ENCODE measurements at regions of chr1 and their contacts with region 1.

Region 1: DNA sequence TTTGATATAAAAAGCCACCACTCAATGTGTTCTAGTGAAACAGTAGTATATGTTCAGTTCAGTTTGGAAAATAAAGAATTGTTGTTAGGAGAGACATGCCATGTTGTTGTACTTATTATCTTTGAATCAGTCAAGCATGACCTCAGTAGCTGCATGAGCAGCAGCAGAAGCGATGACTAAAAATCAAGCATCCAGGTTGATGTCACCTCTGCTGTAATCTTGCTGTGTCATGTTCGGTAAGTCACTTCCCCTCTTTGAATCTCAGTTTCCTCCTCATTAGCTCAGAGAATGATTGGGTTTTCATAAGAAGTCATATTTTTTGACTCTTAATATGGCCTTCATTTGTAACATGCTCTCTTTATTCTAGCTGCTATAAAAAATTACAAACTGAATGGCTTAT is 428.4 kb upstream of the B3GALT2 start:
- DNase-seq: no peak
- ATAC-seq: no peak
- H3K4me3 ChIP-seq: no peak overlapping the region
- H3K4me3 Mint-ChIP-seq: no peak overlapping the region
- H3K27ac ChIP-seq: no peak overlapping the region
- H3K27ac Mint-ChIP-seq: no peak overlapping the region
- H3K4me1 ChIP-seq: no peaks in the 10 kb centered on the region
- H3K4me1 Mint-ChIP-seq: no peaks in the 10 kb centered on the region
- H3K27me3 ChIP-seq: no peaks in the 10 kb centered on the region
- H3K27me3 Mint-ChIP-seq: no peaks in the 10 kb centered on the region
- CTCF ChIP-seq: no peak

Region 2: GRCh38 chr1:193602705-193603104 is 12.1 kb before region 1 on chr1:
- CTCF ChIA-PET with region 1: no interaction called
- POLR2A ChIA-PET with region 1: interaction called, 4 read pairs
- intact Hi-C with region 1: loop called in 1 of 2 experiments (anchors 2 kb)
- DNase-seq: no peak
- ATAC-seq: no peak
- H3K4me3 ChIP-seq: no peak overlapping the region
- H3K4me3 Mint-ChIP-seq: no peak overlapping the region
- H3K27ac ChIP-seq: no peak overlapping the region
- H3K27ac Mint-ChIP-seq: no peak overlapping the region
- H3K4me1 ChIP-seq: no peaks in the 10 kb centered on the region
- H3K4me1 Mint-ChIP-seq: peaks cover 2% of the 10 kb centered on the region
- H3K27me3 ChIP-seq: no peaks in the 10 kb centered on the region
- H3K27me3 Mint-ChIP-seq: no peaks in the 10 kb centered on the region
- CTCF ChIP-seq: no peak

Region 3: GRCh38 chr1:193629875-193630274 is 15.1 kb after region 1 on chr1:
- CTCF ChIA-PET with region 1: no interaction called
- POLR2A ChIA-PET with region 1: no interaction called
- intact Hi-C with region 1: no loop called
- DNase-seq: no peak
- ATAC-seq: no peak
- H3K4me3 ChIP-seq: no peak overlapping the region
- H3K4me3 Mint-ChIP-seq: no peak overlapping the region
- H3K27ac ChIP-seq: no peak overlapping the region
- H3K27ac Mint-ChIP-seq: no peak overlapping the region
- H3K4me1 ChIP-seq: peaks cover 4% of the 10 kb centered on the region
- H3K4me1 Mint-ChIP-seq: peaks cover 9% of the 10 kb centered on the region
- H3K27me3 ChIP-seq: no peaks in the 10 kb centered on the region
- H3K27me3 Mint-ChIP-seq: no peaks in the 10 kb centered on the region
- CTCF ChIP-seq: no peak

Measured in CD8-positive, alpha-beta T cell (primary cell).